HAP-1 (cell line): ENCODE measurements at regions of chr2 and their contacts with region 1.

Region 1: DNA sequence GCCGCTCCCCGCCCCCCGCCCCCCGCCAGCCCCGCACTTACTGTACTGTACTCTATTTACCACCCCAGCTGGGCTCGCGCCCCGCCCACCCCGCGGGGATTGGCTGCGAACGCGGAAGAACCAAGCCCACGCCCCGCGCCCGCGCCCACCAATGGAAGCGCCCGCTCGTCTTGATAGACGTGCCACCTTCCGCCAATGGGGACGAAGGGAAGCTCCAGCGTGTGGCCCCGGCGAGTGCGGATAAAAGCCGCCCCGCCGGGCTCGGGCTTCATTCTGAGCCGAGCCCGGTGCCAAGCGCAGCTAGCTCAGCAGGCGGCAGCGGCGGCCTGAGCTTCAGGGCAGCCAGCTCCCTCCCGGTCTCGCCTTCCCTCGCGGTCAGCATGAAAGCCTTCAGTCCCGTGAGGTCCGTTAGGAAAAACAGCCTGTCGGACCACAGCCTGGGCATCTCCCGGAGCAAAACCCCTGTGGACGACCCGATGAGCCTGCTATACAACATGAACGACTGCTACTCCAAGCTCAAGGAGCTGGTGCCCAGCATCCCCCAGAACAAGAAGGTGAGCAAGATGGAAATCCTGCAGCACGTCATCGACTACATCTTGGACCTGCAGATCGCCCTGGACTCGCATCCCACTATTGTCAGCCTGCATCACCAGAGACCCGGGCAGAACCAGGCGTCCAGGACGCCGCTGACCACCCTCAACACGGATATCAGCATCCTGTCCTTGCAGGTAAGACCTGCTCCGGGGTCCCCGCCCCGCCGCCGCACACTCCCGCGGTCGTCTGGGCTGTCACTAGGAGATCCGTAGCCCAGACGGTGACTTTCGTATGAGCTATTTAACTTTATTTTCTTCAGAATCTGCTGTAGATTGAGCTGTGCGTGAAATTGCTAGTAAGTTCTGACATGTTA is at the start of gene ID2:
- DNase-seq: peak; percentile 93 to 99
- H3K4me3 ChIP-seq: peak within 1 kb of the TSS; percentile 69
- H3K4me1 ChIP-seq: peaks cover 31% of the 10 kb centered on the region
- H3K27me3 ChIP-seq: no peaks in the 10 kb centered on the region

Region 2: DNA sequence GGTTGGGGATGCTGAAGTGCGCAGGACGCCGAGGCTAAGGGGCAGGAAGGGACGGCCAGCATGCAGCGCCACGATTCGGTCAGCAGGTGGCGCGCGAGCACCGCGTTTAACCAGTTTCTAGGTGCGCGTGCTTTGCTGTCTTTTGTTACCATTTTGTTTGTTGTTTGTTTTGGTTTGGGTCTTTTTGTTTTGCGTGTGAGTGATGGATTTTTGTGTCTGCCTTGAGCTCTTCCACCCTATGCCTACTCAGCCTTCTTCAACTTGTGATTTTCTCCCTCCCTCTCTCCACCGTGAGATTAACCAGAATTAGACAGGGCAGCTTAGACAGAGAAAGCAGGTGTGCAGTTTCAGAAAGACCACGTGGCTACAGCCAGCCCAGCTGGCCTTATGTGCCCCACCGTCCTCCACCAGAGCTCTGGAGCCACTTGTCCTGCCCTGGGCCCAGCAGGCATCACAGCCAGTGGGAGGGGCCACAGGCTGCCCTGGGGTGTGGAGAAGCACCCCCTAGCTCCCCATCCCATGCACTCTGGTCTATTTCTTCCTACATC is 1584.6 kb before region 1 on chr2:
- in situ Hi-C with region 1: loop called (anchors 10 kb)
- DNase-seq: peak; percentile 28 to 79
- H3K4me3 ChIP-seq: no peak overlapping the region
- H3K4me1 ChIP-seq: no peaks in the 10 kb centered on the region
- H3K27me3 ChIP-seq: no peaks in the 10 kb centered on the region

Region 3: DNA sequence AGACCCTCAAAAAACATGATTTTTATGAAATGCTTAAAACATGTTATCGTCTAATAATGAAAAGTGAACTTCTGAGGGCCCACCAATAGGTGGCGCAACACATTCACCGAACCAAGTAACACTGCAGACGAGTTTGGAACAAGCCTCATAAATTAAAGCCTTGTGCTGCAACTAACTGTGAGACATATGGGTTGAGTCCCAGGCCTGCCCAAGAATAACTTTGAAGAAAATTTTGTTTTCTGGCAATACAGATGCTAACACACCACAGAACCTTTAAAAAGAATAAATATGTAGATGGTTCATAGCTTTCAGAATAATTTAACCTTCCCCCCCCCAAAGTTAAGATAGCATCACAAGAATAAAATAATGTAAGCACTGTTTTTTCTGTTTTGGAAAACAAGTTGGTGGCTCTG is 1479.0 kb before region 1 on chr2:
- in situ Hi-C with region 1: loop called (anchors 25 kb)
- DNase-seq: peak; percentile 60 to 63
- H3K4me3 ChIP-seq: no peak overlapping the region
- H3K4me1 ChIP-seq: no peaks in the 10 kb centered on the region
- H3K27me3 ChIP-seq: peaks cover 7% of the 10 kb centered on the region

Region 4: GRCh38 chr2:7427293-7428060 is 1254.6 kb before region 1 on chr2:
- in situ Hi-C with region 1: loop called (anchors 5 kb)
- DNase-seq: peak; percentile 35 to 57
- H3K4me3 ChIP-seq: no peak overlapping the region
- H3K4me1 ChIP-seq: no peaks in the 10 kb centered on the region
- H3K27me3 ChIP-seq: no peaks in the 10 kb centered on the region; the same call in 1 of the 2 replicates

Region 5: GRCh38 chr2:8189316-8189715 is 492.7 kb before region 1 on chr2:
- in situ Hi-C with region 1: no loop called
- DNase-seq: no peak
- H3K4me3 ChIP-seq: no peak overlapping the region
- H3K4me1 ChIP-seq: no peaks in the 10 kb centered on the region
- H3K27me3 ChIP-seq: no peaks in the 10 kb centered on the region